ENCODE measurements at regions of chr7 and their contacts with region 1.

Region 1: GRCh38 chr7:135558337-135558767 is 635 bp downstream of the NUP205 start:
- DNase-seq: peak; percentile 54 to 84
- ATAC-seq: peak; percentile 60 to 77 (median 63)
- H3K4me3 ChIP-seq: peak overlapping the region; percentile 82
- H3K4me3 Mint-ChIP-seq: no peak overlapping the region
- H3K27ac ChIP-seq: peak overlapping the region; percentile 98
- H3K27ac Mint-ChIP-seq: no peak overlapping the region
- H3K4me1 ChIP-seq: peaks cover 7% of the 10 kb centered on the region
- H3K4me1 Mint-ChIP-seq: peaks cover 0 to 24% of the 10 kb centered on the region in 2 donors
- H3K27me3 ChIP-seq: no peaks in the 10 kb centered on the region
- H3K27me3 Mint-ChIP-seq: peaks cover 0 to 5% of the 10 kb centered on the region in 2 donors
- CTCF ChIP-seq: peak; percentile 65

Region 2: GRCh38 chr7:135281363-135281949 is 276.9 kb before region 1 on chr7:
- intact Hi-C with region 1: loop called (anchors 1 kb)
- DNase-seq: peak; percentile 54 to 91
- ATAC-seq: peak; percentile 97 to 100 (median 100)
- H3K4me3 ChIP-seq: no peak overlapping the region
- H3K4me3 Mint-ChIP-seq: no peak overlapping the region
- H3K27ac ChIP-seq: no peak overlapping the region
- H3K27ac Mint-ChIP-seq: no peak overlapping the region
- H3K4me1 ChIP-seq: no peaks in the 10 kb centered on the region
- H3K4me1 Mint-ChIP-seq: peaks cover 6% of the 10 kb centered on the region in 2 donors
- H3K27me3 ChIP-seq: no peaks in the 10 kb centered on the region
- H3K27me3 Mint-ChIP-seq: peaks cover 9 to 30% of the 10 kb centered on the region in 2 donors
- CTCF ChIP-seq: peak; percentile 98

Region 3: DNA sequence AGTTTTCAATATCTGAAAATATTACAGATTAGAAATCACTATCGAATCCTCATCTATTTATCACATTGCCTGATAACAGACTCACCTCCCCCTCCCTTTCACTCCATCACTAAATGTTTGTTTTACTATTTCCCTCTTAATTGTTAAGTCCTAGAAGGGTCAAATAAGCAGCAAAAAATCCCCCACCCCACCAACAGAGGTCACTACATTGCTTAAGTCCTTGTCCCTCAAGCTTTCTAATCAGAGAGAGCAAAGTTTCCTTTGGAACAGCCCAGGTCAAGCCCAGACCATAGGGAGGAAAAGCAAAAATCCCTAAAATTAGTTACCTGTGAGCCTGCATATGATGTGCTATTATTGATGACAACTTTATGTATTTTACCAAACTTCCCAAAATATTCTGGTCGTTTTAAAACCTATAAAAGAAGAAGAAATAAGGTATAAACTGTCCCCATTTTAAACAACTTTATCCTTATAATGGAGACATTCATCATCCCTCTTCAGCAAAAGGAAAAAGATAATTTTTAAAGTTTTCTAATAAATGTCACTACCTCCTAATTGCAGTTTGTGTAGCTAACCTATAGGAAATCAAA is 143.4 kb before region 1 on chr7:
- intact Hi-C with region 1: loop called (anchors 10 kb)
- DNase-seq: peak in 1 of 2 donors; percentile 43
- ATAC-seq: peak in 2 of 3 donors; percentile 55 to 64
- H3K4me3 ChIP-seq: no peak overlapping the region
- H3K4me3 Mint-ChIP-seq: no peak overlapping the region
- H3K27ac ChIP-seq: no peak overlapping the region
- H3K27ac Mint-ChIP-seq: no peak overlapping the region
- H3K4me1 ChIP-seq: no peaks in the 10 kb centered on the region
- H3K4me1 Mint-ChIP-seq: peaks cover 0 to 6% of the 10 kb centered on the region in 2 donors
- H3K27me3 ChIP-seq: no peaks in the 10 kb centered on the region
- H3K27me3 Mint-ChIP-seq: no peaks in the 10 kb centered on the region
- CTCF ChIP-seq: peak; percentile 30

Region 4: GRCh38 chr7:135509903-135510602 is 48.3 kb before region 1 on chr7 and contains the start of gene CNOT4:
- intact Hi-C with region 1: loop called (anchors 1 kb)
- DNase-seq: peak; percentile 87 to 98
- ATAC-seq: peak; percentile 91 to 98 (median 94)
- H3K4me3 ChIP-seq: peak within 1 kb of the TSS; percentile 88
- H3K4me3 Mint-ChIP-seq: no peak within 1 kb of the TSS
- H3K27ac ChIP-seq: peak within 1 kb of the TSS; percentile 95
- H3K27ac Mint-ChIP-seq: no peak within 1 kb of the TSS
- H3K4me1 ChIP-seq: peaks cover 12% of the 10 kb centered on the region
- H3K4me1 Mint-ChIP-seq: peaks cover 6 to 8% of the 10 kb centered on the region in 2 donors
- H3K27me3 ChIP-seq: no peaks in the 10 kb centered on the region
- H3K27me3 Mint-ChIP-seq: no peaks in the 10 kb centered on the region
- CTCF ChIP-seq: no peak
- total RNA-seq, gene CNOT4: 40.6 to 47.1 (median 40.7) TPM

Region 5: DNA sequence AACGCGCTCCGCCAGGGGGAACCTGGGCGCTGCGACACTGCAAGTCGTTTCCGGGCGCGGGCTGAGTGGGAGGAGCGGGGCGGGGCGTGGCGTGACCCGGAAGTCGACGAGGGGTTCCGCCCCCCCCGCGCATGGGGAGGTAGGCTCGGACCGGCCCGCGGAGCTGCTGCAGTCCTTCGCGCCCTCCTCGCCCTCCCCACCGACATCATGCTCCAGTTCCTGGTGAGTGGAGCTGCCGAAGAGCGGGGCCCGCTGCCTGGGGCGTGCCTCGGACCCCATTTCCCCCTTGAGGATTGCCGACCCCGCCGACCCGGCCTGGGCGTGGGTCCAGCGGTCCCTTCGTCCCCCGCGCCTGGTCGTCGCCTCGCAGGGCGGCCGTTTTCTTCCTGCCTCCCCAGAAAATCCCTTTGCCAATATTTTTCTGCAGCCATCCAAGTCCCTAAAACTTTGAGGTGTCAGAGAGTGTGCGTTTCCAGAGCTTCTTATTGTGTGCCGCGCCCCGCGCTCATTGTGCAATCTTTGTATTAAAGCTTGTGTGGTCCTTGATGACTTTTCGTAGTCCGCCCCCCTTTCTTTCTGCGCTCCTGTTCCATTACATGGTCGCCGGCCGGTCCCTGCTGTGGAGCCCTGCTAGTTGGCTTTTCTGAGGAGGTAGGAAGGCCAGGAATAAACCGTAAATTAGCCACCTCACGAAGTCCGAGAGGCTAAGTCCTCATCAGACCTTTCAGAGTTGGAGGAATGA is 104.2 kb after region 1 on chr7 and contains the start of gene STMP1:
- intact Hi-C with region 1: loop called (anchors 1 kb)
- DNase-seq: peak; percentile 96 to 97
- ATAC-seq: peak; percentile 99
- H3K4me3 ChIP-seq: peak within 1 kb of the TSS; percentile 96
- H3K4me3 Mint-ChIP-seq: peak within 1 kb of the TSS; percentile 99
- H3K27ac ChIP-seq: peak within 1 kb of the TSS; percentile 63
- H3K27ac Mint-ChIP-seq: peak within 1 kb of the TSS; percentile 88 to 93
- H3K4me1 ChIP-seq: peaks cover 19% of the 10 kb centered on the region
- H3K4me1 Mint-ChIP-seq: peaks cover 18 to 28% of the 10 kb centered on the region in 2 donors
- H3K27me3 ChIP-seq: no peaks in the 10 kb centered on the region
- H3K27me3 Mint-ChIP-seq: no peaks in the 10 kb centered on the region
- CTCF ChIP-seq: peak; percentile 75
- total RNA-seq, gene STMP1: 19.4 to 25.8 (median 22.3) TPM

Measured in natural killer cell (primary cell).